ENCODE measurements at regions of chr10 and their contacts with region 1.

Region 1: DNA sequence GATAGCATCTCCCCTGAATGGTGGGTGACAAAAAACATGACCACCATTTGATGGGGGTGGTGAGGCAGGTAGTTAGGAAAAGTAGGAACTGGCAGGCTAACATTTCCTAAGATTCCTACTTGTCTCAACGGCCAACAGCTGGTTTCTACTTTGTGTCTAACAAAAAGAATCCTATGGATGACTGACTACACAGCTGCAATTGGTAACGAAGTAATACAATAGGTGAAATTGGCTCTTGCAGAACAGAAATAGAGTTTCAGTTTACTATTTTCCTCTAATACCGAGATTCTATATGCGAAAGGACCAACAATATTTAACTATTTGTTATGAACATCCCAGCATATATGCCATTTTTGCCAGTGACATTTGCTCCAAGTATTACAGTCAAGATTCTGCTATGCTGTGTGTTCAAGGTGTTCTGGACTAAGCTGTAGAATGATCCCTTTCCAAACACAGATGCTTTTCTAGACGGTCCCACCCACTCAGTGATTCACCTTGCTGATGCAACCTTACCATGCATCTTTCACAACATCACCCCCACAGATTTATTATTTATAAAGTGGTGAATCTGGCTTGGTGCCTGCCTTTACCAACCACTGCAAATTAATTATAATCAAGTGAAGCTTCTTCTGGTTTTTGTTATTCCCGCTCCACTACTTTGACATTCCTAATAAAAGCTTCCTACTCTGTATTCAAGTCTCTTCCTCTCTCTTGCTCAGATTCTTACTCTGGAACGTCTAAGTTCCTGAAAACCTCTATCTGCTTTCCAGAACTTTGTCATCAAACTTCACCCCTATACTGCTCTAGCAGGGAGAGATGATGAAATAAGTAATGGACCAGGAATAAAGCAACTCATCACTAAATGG is 16.8 kb downstream of the BBIP1 start:
- DNase-seq: no peak
- H3K4me3 ChIP-seq: no peak overlapping the region
- H3K27ac ChIP-seq: no peak overlapping the region
- H3K4me1 ChIP-seq: peaks cover 7% of the 10 kb centered on the region
- CTCF ChIP-seq: no peak

Region 2: DNA sequence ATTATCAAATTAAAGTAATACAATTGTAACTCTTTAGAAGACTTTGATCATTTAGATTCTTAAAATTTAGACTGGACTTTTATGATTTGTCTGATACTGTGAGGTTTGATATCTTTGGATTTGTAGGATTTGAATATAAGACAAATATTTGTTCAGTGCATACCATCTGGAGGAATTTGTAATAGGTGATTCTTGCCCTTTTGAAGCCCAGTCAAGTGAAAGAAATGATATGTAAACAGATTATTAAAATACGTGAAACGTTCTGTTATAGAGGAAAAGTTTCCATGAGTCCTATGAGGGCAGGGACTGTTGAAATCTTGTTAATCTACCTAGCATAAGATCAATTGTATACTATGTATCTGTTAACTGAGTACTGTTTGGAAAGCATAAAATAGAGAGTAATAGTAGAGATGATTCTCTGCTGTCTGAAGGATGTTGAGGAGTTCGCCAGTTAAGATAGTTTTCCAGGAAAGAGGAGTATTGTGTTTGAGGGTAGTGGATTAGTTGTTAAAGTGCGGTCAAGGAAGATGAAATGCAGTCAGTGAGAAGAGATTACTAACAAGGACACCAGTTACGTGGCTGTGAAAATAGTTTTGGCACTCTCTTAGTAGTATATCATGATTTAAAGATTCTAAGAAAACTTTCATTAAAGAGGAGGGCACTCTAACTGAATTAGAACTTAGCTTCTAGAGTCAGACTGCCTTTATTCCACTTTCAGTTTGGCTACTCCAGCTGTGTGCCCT is 16.1 kb before region 1 on chr10:
- CTCF ChIA-PET with region 1: no interaction called
- POLR2A ChIA-PET with region 1: interaction called, 14 read pairs
- intact Hi-C with region 1: no loop called
- DNase-seq: no peak
- H3K4me3 ChIP-seq: no peak overlapping the region
- H3K27ac ChIP-seq: no peak overlapping the region
- H3K4me1 ChIP-seq: peaks cover 17% of the 10 kb centered on the region
- CTCF ChIP-seq: no peak

Region 3: DNA sequence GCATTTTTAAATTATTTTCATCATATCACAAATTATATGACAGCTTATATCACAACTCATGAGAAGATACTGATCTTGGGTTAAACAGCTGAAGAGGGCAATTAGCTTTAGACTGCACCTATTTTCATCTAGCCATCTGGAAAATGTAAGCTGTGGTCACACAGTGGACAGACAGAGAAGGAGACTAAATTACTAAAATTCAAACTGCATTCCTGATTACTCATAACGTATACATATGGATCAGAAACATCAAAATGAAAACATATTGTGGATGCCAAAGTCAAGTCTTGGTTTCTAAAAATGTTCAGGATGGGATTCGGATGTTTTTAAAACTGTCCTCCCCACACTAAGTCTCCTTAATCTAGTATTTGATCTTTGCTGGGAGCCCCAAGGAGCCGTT is 10.2 kb after region 1 on chr10:
- CTCF ChIA-PET with region 1: no interaction called
- POLR2A ChIA-PET with region 1: interaction called, 16 read pairs
- intact Hi-C with region 1: no loop called
- DNase-seq: no peak
- H3K4me3 ChIP-seq: no peak overlapping the region
- H3K27ac ChIP-seq: no peak overlapping the region
- H3K4me1 ChIP-seq: peaks cover 32% of the 10 kb centered on the region
- CTCF ChIP-seq: no peak

Region 4: GRCh38 chr10:111247781-111248389 is 345.7 kb after region 1 on chr10:
- CTCF ChIA-PET with region 1: no interaction called
- POLR2A ChIA-PET with region 1: no interaction called
- intact Hi-C with region 1: no loop called
- DNase-seq: no peak
- H3K4me3 ChIP-seq: no peak overlapping the region
- H3K27ac ChIP-seq: no peak overlapping the region
- H3K4me1 ChIP-seq: no peaks in the 10 kb centered on the region
- CTCF ChIP-seq: no peak

Measured in OCI-LY7 (cell line).